ENCODE measurements at regions of chr2 and their contacts with region 1.

Region 1: DNA sequence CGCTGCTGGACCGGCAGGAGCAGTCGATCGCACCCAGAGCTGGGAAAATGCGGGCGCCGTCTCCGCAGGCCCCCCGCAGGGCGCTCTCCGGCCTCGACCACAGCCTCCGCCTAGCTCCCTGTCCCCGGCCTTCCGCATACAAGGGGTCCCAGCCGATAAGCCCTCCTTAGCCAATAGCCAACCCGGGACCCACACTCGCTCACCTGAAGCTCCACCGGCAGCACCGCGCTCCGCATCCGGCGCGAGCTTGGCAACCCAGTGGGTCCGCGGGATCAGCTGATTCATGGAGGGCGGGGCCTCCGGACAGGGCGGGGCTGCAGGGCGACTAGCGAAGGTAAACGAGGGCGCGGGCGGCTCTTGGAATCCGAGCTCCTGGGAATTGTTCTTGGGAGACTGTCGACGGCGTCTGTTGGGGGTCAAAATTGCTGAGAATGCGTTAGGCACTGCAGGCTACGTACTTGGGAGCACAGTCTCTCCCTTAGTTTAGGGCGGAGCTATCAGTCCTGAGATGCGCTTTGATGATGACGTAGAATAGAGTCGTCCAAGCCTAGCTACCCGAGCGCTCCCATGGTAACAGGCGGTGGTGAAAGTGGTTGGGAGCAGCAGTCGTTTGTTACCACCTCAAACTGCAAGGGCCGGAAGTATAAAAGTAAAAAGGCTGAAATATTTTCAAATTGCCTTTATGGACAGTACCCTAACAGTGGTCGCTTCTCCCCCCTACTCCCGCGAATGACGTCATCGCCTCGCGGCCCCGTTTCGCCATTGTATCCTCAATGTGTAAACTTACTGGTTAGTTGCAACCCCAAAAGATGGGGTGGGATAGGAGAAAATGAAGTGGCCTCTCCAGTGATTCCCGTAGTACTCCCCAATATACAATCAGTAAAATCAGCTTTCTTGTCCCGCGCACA is at the start of gene ALS2:
- DNase-seq: peak; percentile 96
- H3K4me3 ChIP-seq: peak within 1 kb of the TSS; percentile 88
- CTCF ChIP-seq: no peak

Region 2: DNA sequence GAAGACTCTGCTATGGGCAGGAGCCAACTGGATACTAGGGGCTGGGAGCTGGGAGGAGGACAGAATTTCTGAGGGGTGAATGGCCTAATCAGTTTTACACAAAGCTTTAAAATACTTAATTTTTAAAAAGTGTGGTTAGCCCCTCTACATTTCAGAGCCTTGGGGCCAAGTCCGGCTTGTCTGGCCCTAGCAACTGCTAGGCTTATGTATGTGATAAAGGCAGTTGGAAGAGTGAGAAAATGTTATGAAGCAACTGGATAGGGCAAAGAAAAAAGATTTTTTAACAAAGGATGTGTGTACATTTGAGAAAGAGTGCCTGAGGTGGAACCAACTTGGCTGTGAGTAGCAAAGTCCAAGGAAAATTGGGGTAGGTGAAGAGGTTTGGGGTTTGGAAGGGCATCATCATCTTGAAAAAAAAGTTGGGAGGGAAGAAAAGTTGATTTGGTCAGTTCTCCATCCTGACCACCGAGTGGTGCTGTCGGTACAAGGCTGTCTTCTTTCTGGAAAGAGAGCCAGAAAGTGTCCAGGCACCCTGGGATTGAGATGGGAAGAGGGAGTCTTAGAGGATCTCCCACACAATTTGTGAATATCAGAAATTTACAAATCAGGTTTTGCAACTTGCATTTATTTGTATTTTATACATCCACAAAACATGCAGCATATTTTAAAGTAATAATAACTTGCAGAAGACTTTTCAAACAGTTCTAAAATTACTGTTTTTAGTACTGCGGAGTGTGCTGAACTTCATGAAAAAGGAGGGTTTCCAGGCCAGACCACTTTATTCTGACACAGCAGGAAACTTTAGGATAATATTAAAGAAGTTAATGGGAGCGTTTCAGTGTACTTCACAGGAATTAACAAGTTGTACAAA is 14.9 kb after region 1 on chr2:
- CTCF ChIA-PET with region 1: interaction called, 11 read pairs
- POLR2A ChIA-PET with region 1: interaction called, 8 read pairs
- DNase-seq: no peak
- H3K4me3 ChIP-seq: no peak overlapping the region
- CTCF ChIP-seq: peak; percentile 81

Region 3: DNA sequence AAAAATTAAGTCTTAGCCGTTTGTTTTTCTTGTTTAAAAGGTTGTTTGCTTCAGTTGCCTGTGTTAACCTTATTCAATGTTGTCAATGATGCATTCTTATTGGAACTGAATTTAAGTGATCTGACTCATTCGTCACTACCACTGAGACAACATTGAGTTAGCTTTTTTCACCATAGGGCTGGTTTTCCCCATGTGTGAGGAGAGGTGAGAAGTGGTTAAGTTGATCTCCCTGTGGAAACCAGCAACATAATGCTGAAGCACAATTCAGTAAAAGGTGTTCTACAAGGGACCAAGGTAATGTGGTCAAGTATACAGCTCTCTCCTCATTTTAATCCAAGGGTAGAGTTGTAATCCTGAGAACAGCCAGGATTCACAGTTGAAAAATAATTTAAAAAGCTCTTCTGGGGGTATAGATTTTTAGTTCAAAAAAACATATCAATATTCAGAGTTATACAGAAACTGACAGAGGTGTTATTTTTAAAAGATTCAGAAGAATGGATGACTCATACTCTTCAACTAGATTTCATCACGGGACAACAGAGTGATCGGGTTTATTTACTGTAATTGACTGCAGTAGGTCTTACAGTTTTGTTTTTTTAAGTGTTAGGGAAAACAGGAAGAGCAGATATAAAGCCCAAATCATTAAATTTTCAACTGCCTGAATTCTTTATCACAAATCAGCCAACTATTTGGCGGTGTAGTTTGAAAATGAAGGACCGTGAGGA is 497.3 kb after region 1 on chr2:
- CTCF ChIA-PET with region 1: no interaction called
- POLR2A ChIA-PET with region 1: no interaction called
- DNase-seq: no peak
- H3K4me3 ChIP-seq: no peak overlapping the region
- CTCF ChIP-seq: no peak

Measured in AG04449 (cell line).